PC-3 (cell line): ENCODE measurements at regions of chr7 and their contacts with region 1.

Region 1: GRCh38 chr7:133770863-133771492 is 356.2 kb upstream of the LRGUK start:
- DNase-seq: peak; percentile 60
- ATAC-seq: peak; percentile 88
- H3K4me3 ChIP-seq: no peak overlapping the region
- H3K27ac ChIP-seq: peak overlapping the region; percentile 29; the same call in 1 of the 2 replicates
- H3K4me1 ChIP-seq: peaks cover 11% of the 10 kb centered on the region
- H3K27me3 ChIP-seq: no peaks in the 10 kb centered on the region
- CTCF ChIP-seq: no peak

Region 2: GRCh38 chr7:133837224-133837623 is 66.2 kb after region 1 on chr7:
- CTCF ChIA-PET with region 1: no interaction called
- POLR2A ChIA-PET with region 1: no interaction called
- intact Hi-C with region 1: loop called (anchors 10 kb)
- DNase-seq: no peak
- ATAC-seq: no peak
- H3K4me3 ChIP-seq: no peak overlapping the region
- H3K27ac ChIP-seq: no peak overlapping the region
- H3K4me1 ChIP-seq: no peaks in the 10 kb centered on the region
- H3K27me3 ChIP-seq: no peaks in the 10 kb centered on the region
- CTCF ChIP-seq: no peak